Tibial artery (tissue), 4 donors: ENCODE measurements at regions of chr11 and their contacts with region 1.

Region 1: DNA sequence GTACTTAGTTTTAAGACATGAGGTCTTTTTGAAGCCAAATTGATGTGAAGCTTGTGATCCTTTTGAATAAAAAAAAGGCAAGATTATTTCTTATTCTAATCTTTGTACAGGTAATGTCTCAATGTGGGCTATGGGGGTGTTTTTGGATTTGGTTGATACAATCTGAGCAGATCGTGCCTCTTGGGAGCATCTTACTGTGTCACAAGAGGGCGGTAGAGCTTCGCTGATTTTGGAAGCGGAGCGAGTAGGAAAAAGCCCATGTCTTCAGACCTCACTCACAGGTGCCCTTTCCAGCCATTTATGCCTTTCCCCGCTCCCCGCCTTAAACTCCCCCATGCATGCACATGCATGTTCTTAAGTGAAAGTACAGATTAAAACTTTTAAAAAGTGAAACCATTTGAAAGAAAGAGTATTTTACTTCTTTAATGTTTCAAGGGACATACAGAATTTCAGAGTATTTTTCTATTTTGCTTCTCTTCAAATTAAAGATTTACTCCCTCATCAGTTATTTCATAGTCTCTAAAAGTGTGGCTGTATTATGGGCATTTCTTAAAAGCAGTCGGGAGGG is 18.8 kb downstream of the DDX25 start:
- DNase-seq: peak in 1 of 2 donors; percentile 59
- H3K4me3 ChIP-seq: no peak overlapping the region
- H3K27ac ChIP-seq: no peak overlapping the region
- H3K4me1 ChIP-seq: no peaks in the 10 kb centered on the region
- H3K27me3 ChIP-seq: peaks cover 0 to 19% of the 10 kb centered on the region in 2 donors
- CTCF ChIP-seq: peak; percentile 78 to 80

Region 2: GRCh38 chr11:125842321-125842948 is 80.7 kb before region 1 on chr11:
- intact Hi-C with region 1: no loop called
- DNase-seq: no peak
- H3K4me3 ChIP-seq: no peak overlapping the region
- H3K27ac ChIP-seq: no peak overlapping the region
- H3K4me1 ChIP-seq: no peaks in the 10 kb centered on the region
- H3K27me3 ChIP-seq: no peaks in the 10 kb centered on the region
- CTCF ChIP-seq: no peak

Region 3: DNA sequence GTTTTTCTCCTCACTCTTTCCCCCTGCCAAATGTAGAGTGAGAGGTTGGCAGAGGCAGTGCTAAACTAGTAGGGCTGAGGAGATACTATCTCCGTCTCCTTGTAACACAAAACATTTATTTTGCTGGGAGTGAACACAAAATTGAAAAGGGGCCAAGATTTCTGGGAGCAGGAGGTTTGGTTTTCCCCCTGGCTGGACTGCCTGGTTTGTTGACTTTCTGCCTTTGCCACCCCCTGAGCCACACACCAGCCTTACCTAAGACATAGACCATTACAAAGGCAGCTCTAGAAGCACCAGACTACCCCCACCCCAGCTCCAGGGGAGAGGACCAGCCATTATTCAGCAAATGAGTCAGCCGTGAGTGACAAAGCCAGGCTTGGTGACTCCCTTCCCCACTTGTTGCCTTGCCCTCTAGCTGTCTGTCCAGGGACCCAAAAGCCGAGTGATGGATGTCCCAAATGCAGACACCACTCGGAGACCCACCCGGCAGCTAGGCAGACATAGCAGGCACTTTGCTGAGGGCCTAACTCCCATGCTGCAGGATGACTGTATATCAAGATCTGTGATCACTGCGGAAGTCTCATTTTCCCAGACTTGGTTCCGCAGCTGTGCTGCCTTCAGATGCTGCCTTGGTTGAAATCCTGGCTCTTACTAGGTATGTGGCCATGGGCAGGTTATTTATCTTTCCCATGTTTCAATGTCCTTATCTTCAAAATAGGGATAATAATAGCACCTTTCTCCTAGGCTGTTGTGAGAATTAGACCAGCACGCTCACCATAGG is 157.3 kb after region 1 on chr11:
- intact Hi-C with region 1: no loop called
- DNase-seq: no peak
- H3K4me3 ChIP-seq: no peak overlapping the region
- H3K27ac ChIP-seq: no peak overlapping the region
- H3K4me1 ChIP-seq: no peaks in the 10 kb centered on the region
- H3K27me3 ChIP-seq: peaks cover 0 to 18% of the 10 kb centered on the region in 2 donors
- CTCF ChIP-seq: no peak

Region 4: GRCh38 chr11:126194121-126194543 is 271.0 kb after region 1 on chr11:
- intact Hi-C with region 1: loop called (anchors 5 kb)
- DNase-seq: peak; percentile 39 to 66
- H3K4me3 ChIP-seq: no peak overlapping the region
- H3K27ac ChIP-seq: no peak overlapping the region
- H3K4me1 ChIP-seq: no peaks in the 10 kb centered on the region
- H3K27me3 ChIP-seq: no peaks in the 10 kb centered on the region
- CTCF ChIP-seq: peak; percentile 74 to 82